Mammary epithelial cell (primary cell): ENCODE measurements at regions of chr1 and their contacts with region 1.

Region 1: GRCh38 chr1:101366513-101367215 is 129.8 kb downstream of the S1PR1 start:
- DNase-seq: peak; percentile 11
- H3K4me3 ChIP-seq: no peak overlapping the region
- H3K27ac ChIP-seq: no peak overlapping the region
- H3K4me1 ChIP-seq: peaks cover 8% of the 10 kb centered on the region
- H3K27me3 ChIP-seq: no peaks in the 10 kb centered on the region
- CTCF ChIP-seq: no peak

Region 2: GRCh38 chr1:101317590-101317989 is 49.1 kb before region 1 on chr1:
- CTCF ChIA-PET with region 1: no interaction called
- dilution Hi-C with region 1: loop called (anchors 5 kb)
- in situ Hi-C with region 1: no loop called
- intact Hi-C with region 1: no loop called
- DNase-seq: no peak
- H3K4me3 ChIP-seq: no peak overlapping the region
- H3K27ac ChIP-seq: no peak overlapping the region
- H3K4me1 ChIP-seq: no peaks in the 10 kb centered on the region
- H3K27me3 ChIP-seq: peaks cover 10% of the 10 kb centered on the region
- CTCF ChIP-seq: no peak

Region 3: GRCh38 chr1:101407505-101408211 is 41.0 kb after region 1 on chr1:
- CTCF ChIA-PET with region 1: no interaction called
- dilution Hi-C with region 1: loop called (anchors 5 kb)
- in situ Hi-C with region 1: no loop called
- intact Hi-C with region 1: no loop called
- DNase-seq: no peak
- H3K4me3 ChIP-seq: no peak overlapping the region
- H3K27ac ChIP-seq: no peak overlapping the region
- H3K4me1 ChIP-seq: no peaks in the 10 kb centered on the region
- H3K27me3 ChIP-seq: no peaks in the 10 kb centered on the region
- CTCF ChIP-seq: no peak

Region 4: DNA sequence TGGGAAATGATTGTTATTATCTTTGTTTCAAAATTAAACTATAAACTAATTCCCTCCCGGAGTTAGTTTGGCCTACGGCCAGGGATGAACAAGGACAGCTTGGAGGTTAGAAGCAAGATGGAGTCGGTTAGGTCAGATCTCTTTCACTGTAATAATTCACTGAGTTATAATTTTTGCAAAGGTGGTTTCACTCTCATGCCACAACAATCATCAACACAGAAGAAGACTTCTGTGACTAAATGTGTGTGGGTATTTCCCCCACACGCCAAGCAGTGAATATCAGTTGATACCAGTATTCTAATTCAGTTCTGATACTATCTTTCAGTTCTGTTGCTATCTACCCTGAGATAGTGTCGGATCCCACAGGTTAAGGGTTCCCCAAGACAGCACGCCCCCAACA is 85.2 kb after region 1 on chr1:
- CTCF ChIA-PET with region 1: no interaction called
- dilution Hi-C with region 1: loop called (anchors 5 kb)
- in situ Hi-C with region 1: no loop called
- intact Hi-C with region 1: no loop called
- DNase-seq: no peak
- H3K4me3 ChIP-seq: no peak overlapping the region
- H3K27ac ChIP-seq: no peak overlapping the region
- H3K4me1 ChIP-seq: no peaks in the 10 kb centered on the region
- H3K27me3 ChIP-seq: no peaks in the 10 kb centered on the region
- CTCF ChIP-seq: no peak